Uterus (tissue), 4 donors: ENCODE measurements at regions of chr22 and their contacts with region 1.

Region 1: DNA sequence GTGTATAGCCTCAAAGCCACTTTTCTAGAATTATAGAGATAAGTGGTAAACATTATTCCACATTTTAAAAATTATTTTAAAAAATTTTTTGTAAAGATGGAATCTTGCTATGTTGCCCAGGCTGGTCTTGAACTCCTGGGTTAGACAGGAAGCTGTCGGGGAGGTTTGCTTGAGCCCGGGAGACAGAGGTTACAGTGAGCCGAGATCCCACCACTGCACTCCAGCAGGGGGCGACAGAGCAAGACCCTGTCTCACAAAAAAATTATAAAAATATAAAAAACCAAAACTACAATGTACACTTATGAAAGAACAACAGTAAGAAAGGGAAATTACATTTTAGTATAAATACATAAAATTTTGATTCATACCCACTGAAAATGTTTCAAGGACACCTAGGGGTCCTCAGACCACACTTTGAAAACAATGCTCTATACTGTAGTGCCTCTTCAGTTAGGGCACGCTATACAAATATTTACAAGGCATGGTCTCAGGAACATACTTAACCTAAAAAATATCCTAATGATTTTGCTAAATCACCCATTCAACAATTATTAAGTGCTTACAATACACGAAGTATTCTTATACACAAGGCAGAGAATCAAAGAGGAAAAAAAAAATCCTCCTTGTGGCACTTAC is 111.2 kb downstream of the MRTFA start:
- DNase-seq: no peak
- H3K4me3 ChIP-seq: no peak overlapping the region
- H3K27ac ChIP-seq: peak overlapping the region; percentile 80 to 82
- H3K4me1 ChIP-seq: peaks cover 0 to 9% of the 10 kb centered on the region in 2 donors
- H3K27me3 ChIP-seq: no peaks in the 10 kb centered on the region
- CTCF ChIP-seq: peak; percentile 29 to 54 (median 38)
- POLR2A ChIP-seq: no peak

Region 2: GRCh38 chr22:40641269-40641668 is 115.9 kb after region 1 on chr22:
- intact Hi-C with region 1: loop called (anchors 10 kb)
- DNase-seq: no peak
- H3K4me3 ChIP-seq: no peak overlapping the region
- H3K27ac ChIP-seq: no peak overlapping the region
- H3K4me1 ChIP-seq: no peaks in the 10 kb centered on the region
- H3K27me3 ChIP-seq: no peaks in the 10 kb centered on the region
- CTCF ChIP-seq: no peak
- POLR2A ChIP-seq: no peak